CD8-positive, alpha-beta T cell (primary cell): ENCODE measurements at regions of chr11 and their contacts with region 1.

Region 1: DNA sequence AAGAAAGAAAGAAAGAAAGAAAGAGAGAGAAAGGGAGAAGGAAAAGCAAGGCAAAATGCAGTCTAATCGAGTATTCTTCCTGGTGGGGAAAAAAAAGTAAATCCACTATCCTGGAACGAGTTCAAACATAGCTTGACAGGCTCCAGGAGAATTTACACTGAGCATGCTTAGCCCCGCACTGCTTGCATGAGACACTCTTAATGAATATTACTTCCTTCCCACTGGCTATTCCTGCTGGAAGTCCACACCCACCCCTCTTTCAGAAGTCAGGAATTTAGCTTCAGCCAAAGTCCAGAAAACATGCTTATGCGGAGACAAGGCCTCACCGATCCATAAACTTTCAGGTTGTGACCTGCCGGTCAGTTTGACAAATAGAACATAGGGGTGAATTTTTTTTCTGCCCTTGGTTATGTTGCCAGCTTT is 251.8 kb upstream of the BLID start:
- DNase-seq: no peak
- ATAC-seq: no peak
- H3K4me3 ChIP-seq: no peak overlapping the region
- H3K4me3 Mint-ChIP-seq: no peak overlapping the region
- H3K27ac ChIP-seq: no peak overlapping the region
- H3K27ac Mint-ChIP-seq: no peak overlapping the region
- H3K4me1 ChIP-seq: no peaks in the 10 kb centered on the region
- H3K4me1 Mint-ChIP-seq: no peaks in the 10 kb centered on the region
- H3K27me3 ChIP-seq: no peaks in the 10 kb centered on the region
- H3K27me3 Mint-ChIP-seq: peaks cover 5% of the 10 kb centered on the region
- CTCF ChIP-seq: no peak

Region 2: DNA sequence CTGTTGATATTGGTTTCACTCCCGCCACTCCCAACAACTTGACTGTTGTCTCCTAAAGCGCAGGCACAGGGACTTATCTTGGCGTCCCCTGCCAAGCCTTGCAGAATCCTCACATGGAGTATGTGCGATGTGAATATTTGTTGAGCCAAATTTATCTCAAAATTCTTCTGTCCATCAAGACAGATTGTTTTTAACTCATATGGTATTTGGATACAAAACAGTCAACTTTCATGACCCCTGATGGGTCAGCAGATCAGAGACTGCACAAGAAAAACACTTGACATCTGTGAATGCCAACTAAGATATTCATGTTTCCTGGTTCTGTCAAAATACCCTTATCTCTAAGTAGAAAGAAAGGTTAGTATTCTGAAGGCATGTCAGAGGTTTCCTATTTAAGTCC is 30.1 kb before region 1 on chr11:
- CTCF ChIA-PET with region 1: no interaction called
- POLR2A ChIA-PET with region 1: no interaction called
- intact Hi-C with region 1: loop called in 1 of 2 experiments (anchors 1 kb)
- DNase-seq: no peak
- ATAC-seq: no peak
- H3K4me3 ChIP-seq: no peak overlapping the region
- H3K4me3 Mint-ChIP-seq: no peak overlapping the region
- H3K27ac ChIP-seq: no peak overlapping the region
- H3K27ac Mint-ChIP-seq: no peak overlapping the region
- H3K4me1 ChIP-seq: no peaks in the 10 kb centered on the region
- H3K4me1 Mint-ChIP-seq: no peaks in the 10 kb centered on the region
- H3K27me3 ChIP-seq: no peaks in the 10 kb centered on the region
- H3K27me3 Mint-ChIP-seq: peaks cover 6% of the 10 kb centered on the region
- CTCF ChIP-seq: no peak

Region 3: DNA sequence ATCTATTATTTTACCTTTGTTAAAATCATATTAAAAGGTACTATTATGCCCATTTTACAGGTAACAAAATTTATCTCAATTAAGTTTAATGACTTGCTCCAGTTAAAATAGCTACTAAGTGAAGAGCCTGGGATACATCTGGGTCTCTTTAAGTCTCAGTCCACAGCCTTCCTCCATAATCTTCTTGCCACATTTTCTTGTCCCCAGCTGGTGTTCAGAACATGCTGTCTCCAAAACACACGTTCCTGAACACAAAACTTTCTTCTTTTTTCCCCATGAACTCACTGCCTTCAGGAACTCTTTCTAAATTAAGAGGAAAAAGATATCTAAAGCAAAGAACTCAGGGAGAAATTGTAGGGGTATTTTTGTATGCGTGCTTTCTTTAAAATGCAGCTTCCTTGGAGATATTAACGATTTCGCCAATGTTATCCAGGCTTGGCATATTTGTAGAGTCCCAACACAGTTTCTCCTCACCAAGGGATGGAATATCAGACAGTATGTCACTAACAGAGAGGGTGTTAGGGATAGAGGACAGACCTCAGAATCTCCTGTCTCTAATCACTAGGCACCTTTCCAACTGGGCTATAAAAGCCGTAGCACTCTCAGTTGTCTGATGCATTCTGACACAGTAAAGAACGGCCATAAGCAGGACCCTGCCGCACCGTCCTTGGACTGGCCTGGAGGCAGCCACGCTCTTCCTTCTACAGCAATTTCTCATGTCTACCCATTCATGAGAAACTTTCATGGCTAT is 19.0 kb before region 1 on chr11:
- CTCF ChIA-PET with region 1: no interaction called
- POLR2A ChIA-PET with region 1: no interaction called
- intact Hi-C with region 1: no loop called
- DNase-seq: no peak
- ATAC-seq: no peak
- H3K4me3 ChIP-seq: no peak overlapping the region
- H3K4me3 Mint-ChIP-seq: no peak overlapping the region
- H3K27ac ChIP-seq: no peak overlapping the region
- H3K27ac Mint-ChIP-seq: no peak overlapping the region
- H3K4me1 ChIP-seq: no peaks in the 10 kb centered on the region
- H3K4me1 Mint-ChIP-seq: no peaks in the 10 kb centered on the region
- H3K27me3 ChIP-seq: no peaks in the 10 kb centered on the region
- H3K27me3 Mint-ChIP-seq: peaks cover 7% of the 10 kb centered on the region
- CTCF ChIP-seq: no peak

Region 4: DNA sequence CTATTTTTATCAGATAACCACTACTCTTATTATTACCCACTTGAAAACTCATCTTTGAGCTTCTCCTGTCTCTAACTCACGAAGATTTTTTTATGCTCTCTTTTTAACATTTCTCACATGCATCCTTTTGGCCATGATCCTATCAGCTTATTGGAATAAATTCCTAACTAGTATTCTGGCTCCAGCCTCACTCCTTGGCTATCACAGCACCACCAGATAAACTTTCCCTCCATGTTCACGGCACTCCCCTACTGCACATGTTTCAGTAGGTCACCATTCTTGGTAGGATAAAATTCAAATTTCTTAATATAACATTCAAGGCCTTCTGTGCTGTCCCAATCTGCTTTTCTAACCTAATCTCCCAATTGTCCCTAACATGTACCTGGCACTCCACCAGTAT is 101.1 kb after region 1 on chr11:
- CTCF ChIA-PET with region 1: no interaction called
- POLR2A ChIA-PET with region 1: no interaction called
- intact Hi-C with region 1: no loop called
- DNase-seq: no peak
- ATAC-seq: no peak
- H3K4me3 ChIP-seq: no peak overlapping the region
- H3K4me3 Mint-ChIP-seq: no peak overlapping the region
- H3K27ac ChIP-seq: no peak overlapping the region
- H3K27ac Mint-ChIP-seq: no peak overlapping the region
- H3K4me1 ChIP-seq: no peaks in the 10 kb centered on the region
- H3K4me1 Mint-ChIP-seq: no peaks in the 10 kb centered on the region
- H3K27me3 ChIP-seq: no peaks in the 10 kb centered on the region
- H3K27me3 Mint-ChIP-seq: peaks cover 1% of the 10 kb centered on the region
- CTCF ChIP-seq: no peak